ENCODE measurements at regions of chr12 and their contacts with region 1.

Region 1: DNA sequence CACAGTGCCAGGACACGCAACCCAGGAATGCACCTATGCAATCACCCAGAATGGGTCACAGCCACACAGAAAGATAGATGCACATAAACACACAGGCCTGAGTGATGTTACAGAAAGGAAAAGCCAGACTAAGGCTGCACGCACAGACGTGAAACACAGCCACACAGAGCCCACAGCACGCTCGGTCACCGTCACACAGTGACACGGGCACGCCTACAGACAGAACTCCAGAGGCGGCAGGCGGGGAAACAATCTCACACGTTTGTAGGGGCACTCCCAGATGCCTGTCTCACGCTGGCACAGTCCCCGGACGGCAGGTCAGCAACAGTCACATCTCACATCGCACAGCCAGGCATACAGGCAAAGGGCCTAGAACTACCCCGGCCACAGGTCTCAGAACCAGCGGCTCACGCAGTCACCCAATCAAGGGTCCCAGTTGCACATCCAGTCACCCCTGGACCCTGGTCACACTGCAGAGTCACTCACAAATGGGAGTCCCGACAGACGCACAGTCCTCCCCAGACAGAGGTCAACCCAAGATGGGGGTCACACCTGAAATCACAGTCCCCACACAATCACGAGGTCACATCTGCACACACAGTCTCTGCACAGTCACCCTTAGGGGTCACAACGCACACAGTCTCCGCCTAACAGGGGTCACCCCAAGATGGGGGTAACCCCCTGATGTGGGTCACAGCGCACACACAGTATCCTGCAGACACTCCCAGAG is 790 bp downstream of the SSH1 start:
- DNase-seq: peak; percentile 59 to 88
- H3K4me3 ChIP-seq: peak overlapping the region; percentile 87 to 93
- H3K27ac ChIP-seq: peak overlapping the region; percentile 93 to 97
- H3K4me1 ChIP-seq: peaks cover 23 to 46% of the 10 kb centered on the region in 2 donors
- H3K27me3 ChIP-seq: no peaks in the 10 kb centered on the region
- CTCF ChIP-seq: no peak

Region 2: GRCh38 chr12:108305520-108305919 is 551.1 kb before region 1 on chr12:
- intact Hi-C with region 1: loop called (anchors 10 kb)
- DNase-seq: peak; percentile 80 to 96
- H3K4me3 ChIP-seq: peak overlapping the region; percentile 39 to 48
- H3K27ac ChIP-seq: peak overlapping the region; percentile 90 to 91
- H3K4me1 ChIP-seq: peaks cover 31 to 64% of the 10 kb centered on the region in 2 donors
- H3K27me3 ChIP-seq: no peaks in the 10 kb centered on the region
- CTCF ChIP-seq: no peak

Region 3: GRCh38 chr12:108562348-108563135 is 294.1 kb before region 1 on chr12 and contains the start of gene ISCU:
- intact Hi-C with region 1: loop called (anchors 2 kb)
- DNase-seq: peak; percentile 79 to 97
- H3K4me3 ChIP-seq: peak within 1 kb of the TSS; percentile 96
- H3K27ac ChIP-seq: peak within 1 kb of the TSS; percentile 90 to 95
- H3K4me1 ChIP-seq: peaks cover 7 to 37% of the 10 kb centered on the region in 2 donors
- H3K27me3 ChIP-seq: no peaks in the 10 kb centered on the region
- CTCF ChIP-seq: no peak
- total RNA-seq, gene ISCU: 136 TPM

Region 4: DNA sequence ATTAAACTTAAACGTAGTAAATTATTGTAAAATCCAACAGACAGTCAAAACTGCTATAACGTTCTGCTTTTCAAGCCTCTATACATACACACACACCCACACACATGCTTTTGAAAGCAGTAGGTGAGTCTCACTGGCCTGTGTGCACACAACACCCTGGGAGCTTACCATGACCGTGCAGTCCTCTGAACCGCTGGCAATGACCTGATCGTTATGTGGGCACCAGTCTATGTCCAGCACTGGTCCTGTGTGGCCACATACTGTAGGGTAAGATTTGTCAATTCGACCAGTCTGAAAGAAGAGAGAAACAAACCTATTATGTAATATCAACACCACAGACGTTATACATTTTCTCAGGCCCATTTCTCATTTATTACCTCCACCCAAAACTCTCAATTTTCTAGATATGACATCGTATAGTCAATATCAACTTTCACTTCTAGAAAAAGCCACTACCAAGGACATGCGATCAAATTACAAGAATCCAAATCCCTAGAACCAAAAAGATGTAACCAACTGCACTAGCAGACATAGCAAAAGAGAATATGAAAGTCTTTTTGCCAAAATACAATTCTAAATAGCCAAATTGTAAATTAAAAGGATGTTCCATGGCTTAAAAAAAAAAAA is 178.4 kb before region 1 on chr12:
- intact Hi-C with region 1: no loop called
- DNase-seq: no peak
- H3K4me3 ChIP-seq: no peak overlapping the region
- H3K27ac ChIP-seq: peak overlapping the region; percentile 9 to 41
- H3K4me1 ChIP-seq: peaks cover 2 to 21% of the 10 kb centered on the region in 2 donors
- H3K27me3 ChIP-seq: no peaks in the 10 kb centered on the region
- CTCF ChIP-seq: no peak

Region 5: GRCh38 chr12:108731105-108731865 is 125.3 kb before region 1 on chr12 and contains the start of gene CORO1C:
- intact Hi-C with region 1: loop called (anchors 1 kb)
- DNase-seq: peak; percentile 84 to 98
- H3K4me3 ChIP-seq: peak within 1 kb of the TSS; percentile 66 to 79
- H3K27ac ChIP-seq: peak within 1 kb of the TSS; percentile 94 to 96
- H3K4me1 ChIP-seq: peaks cover 0 to 30% of the 10 kb centered on the region in 2 donors
- H3K27me3 ChIP-seq: no peaks in the 10 kb centered on the region
- CTCF ChIP-seq: peak; percentile 82 to 94 (median 83)
- total RNA-seq, gene CORO1C: 106 TPM

Region 6: GRCh38 chr12:108793756-108794441 is 62.7 kb before region 1 on chr12:
- intact Hi-C with region 1: no loop called
- DNase-seq: peak in 1 of 2 donors; percentile 77
- H3K4me3 ChIP-seq: no peak overlapping the region
- H3K27ac ChIP-seq: peak overlapping the region; percentile 69 to 77
- H3K4me1 ChIP-seq: peaks cover 1 to 3% of the 10 kb centered on the region in 2 donors
- H3K27me3 ChIP-seq: no peaks in the 10 kb centered on the region
- CTCF ChIP-seq: no peak

Region 7: DNA sequence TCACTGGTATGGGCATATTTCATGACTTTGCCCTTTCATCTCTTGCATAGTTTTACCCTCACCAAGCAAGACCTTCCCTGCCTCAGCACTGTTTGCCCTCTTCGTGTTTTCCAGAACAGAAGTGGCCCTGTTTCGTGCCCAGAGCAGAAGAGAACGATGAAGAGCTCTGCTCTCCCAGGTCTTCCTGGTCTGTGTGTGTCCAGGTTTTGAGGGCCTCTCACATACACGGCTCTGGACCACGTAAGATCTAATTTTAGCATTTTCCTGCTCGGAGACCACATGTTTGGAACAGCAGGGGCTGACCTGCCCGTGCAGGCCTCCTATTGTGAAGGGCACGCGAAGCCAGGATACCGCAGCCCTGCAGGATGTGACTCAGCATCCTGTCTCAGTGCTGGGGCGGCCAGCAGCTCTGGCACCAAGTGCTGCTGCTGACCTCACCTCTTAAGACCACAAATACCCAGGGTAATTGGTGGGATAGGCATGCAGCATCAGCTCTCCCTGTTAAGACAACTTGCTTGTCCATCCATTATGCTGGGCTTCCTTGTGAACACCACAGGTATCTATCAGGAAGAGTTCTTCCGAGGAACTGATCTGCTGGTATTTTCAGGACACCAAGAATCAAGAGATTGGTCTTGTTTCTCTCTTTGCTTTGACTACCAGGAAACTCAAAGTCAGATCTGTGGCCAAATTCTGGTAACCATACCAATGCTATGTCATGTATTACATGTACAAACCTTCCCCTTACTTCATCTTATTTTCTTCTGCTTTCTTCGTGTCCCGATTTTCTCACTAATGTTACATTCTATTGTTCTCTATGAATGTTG is 18.2 kb before region 1 on chr12:
- intact Hi-C with region 1: loop called (anchors 1 kb)
- DNase-seq: peak; percentile 95 to 98
- H3K4me3 ChIP-seq: no peak overlapping the region
- H3K27ac ChIP-seq: peak overlapping the region; percentile 96 to 97
- H3K4me1 ChIP-seq: peaks cover 40 to 62% of the 10 kb centered on the region in 2 donors
- H3K27me3 ChIP-seq: no peaks in the 10 kb centered on the region
- CTCF ChIP-seq: no peak

Measured in ascending aorta (tissue), 2 donors.